ENCODE measurements at regions of chr1 and their contacts with region 1.

Region 1: GRCh38 chr1:178581351-178582303 is 68.7 kb downstream of the TEX35 start:
- DNase-seq: peak in 1 of 5 donors; percentile 38
- H3K4me3 ChIP-seq: no peak overlapping the region
- H3K27ac ChIP-seq: no peak overlapping the region
- H3K4me1 ChIP-seq: peaks cover 7% of the 10 kb centered on the region
- H3K27me3 ChIP-seq: no peaks in the 10 kb centered on the region
- CTCF ChIP-seq: no peak
- EP300 ChIP-seq: no peak
- POLR2A ChIP-seq: no peak

Region 2: GRCh38 chr1:178501705-178502329 is 79.8 kb before region 1 on chr1:
- intact Hi-C with region 1: no loop called
- DNase-seq: peak; percentile 31 to 79 (median 67)
- H3K4me3 ChIP-seq: no peak overlapping the region
- H3K27ac ChIP-seq: no peak overlapping the region
- H3K4me1 ChIP-seq: no peaks in the 10 kb centered on the region
- H3K27me3 ChIP-seq: no peaks in the 10 kb centered on the region
- CTCF ChIP-seq: peak in 2 of 3 donors; percentile 44 to 50
- EP300 ChIP-seq: no peak
- POLR2A ChIP-seq: no peak

Region 3: DNA sequence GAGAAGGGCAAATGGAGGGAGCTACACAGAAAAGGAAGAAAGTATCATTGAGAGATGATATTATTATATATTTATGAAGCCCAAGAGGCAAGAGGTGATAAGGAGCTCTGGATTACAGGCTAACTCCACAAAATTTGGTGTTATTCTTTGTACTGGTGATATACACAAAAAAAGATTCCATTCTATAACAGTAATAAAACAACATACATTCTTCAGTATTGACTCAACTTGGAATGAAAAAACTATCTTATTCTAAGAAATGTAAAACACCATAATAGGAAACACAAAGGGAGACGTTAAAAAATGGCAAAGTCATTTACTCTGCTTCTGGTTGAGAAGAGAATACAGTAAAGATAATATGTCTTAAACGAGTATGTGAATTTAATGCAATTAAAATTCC is 30.6 kb after region 1 on chr1:
- intact Hi-C with region 1: loop called in 1 of 4 experiments (anchors 2 kb)
- DNase-seq: no peak
- H3K4me3 ChIP-seq: no peak overlapping the region
- H3K27ac ChIP-seq: no peak overlapping the region
- H3K4me1 ChIP-seq: no peaks in the 10 kb centered on the region
- H3K27me3 ChIP-seq: no peaks in the 10 kb centered on the region
- CTCF ChIP-seq: no peak
- EP300 ChIP-seq: no peak
- POLR2A ChIP-seq: no peak

Region 4: DNA sequence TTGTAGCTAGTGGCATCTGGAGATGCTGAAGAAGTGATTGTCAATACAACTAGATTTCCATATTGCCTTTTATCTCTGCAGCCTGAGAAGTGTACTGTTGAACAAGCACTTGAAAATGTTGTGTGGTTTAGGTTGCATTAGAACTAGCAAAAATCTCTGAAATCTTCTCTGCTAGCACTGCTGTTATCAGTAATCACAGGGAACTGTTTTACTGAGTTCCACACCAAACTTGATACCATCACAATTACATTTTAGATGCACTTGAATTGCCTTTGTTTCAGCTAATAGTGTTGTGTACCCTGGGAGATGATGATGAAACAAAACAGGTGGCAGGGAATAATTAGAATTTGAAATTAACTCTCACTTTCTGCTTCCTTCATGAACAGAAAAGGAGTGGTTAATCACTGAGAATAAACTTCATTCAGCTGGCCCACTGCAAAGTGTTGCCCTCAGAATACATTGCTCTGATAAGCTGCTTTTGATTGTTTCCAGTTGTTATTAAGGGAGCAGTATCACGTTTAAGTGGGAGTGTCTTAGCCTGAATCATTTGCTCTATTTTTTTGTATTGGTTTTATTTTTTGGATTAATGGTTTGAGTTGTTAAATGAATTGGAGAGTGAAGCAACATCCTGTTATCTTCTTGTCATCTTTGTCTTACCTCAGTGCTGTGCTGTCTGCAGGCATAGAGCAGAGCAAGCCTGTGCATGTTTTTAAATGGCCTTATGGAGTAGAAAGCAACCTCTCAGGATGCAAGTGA is 457.1 kb after region 1 on chr1:
- intact Hi-C with region 1: no loop called
- DNase-seq: no peak
- H3K4me3 ChIP-seq: no peak overlapping the region
- H3K27ac ChIP-seq: no peak overlapping the region
- H3K4me1 ChIP-seq: peaks cover 15% of the 10 kb centered on the region
- H3K27me3 ChIP-seq: no peaks in the 10 kb centered on the region
- CTCF ChIP-seq: no peak
- EP300 ChIP-seq: no peak
- POLR2A ChIP-seq: no peak

Measured in ovary (tissue), 10 donors.